ENCODE measurements at regions of chr15 and their contacts with region 1.

Region 1: DNA sequence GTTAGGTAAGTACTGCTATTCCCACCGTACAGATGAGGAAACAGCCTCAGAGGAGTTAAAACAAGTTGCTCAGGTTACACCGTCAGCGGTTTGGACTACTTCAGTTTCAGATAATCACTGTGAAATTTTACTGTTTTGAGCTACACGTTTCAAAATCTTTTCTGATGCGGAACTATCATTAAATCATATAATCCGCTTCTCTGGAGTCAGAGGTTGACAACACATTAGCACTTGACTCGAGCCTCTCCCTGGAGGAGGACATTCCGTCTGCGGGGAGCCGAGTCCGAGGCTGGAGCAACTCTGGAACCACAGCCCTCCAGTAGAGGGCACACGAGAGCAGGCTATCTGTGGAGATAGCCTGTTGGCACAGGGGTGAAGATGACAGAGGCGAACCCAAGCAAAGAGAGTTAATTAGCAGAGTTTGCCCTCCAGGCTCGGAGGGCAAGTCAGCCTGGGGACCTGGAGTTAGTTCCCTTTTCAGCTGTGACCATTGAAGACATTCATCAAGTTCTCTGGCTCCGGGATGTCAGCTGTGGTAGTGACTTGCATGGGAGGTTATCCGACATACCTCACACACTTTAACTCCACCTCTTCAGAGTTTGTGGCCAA is 131.2 kb downstream of the IGF1R start:
- DNase-seq: peak; percentile 53 to 65 (median 58)
- H3K4me3 ChIP-seq: no peak overlapping the region
- H3K4me3 Mint-ChIP-seq: peak overlapping the region in 6 of 8 donors; percentile 2 to 73 (median 42)
- H3K27ac ChIP-seq: no peak overlapping the region
- H3K27ac Mint-ChIP-seq: peak overlapping the region in 4 of 7 donors; percentile 15 to 88 (median 38)
- H3K4me1 ChIP-seq: peaks cover 14% of the 10 kb centered on the region
- H3K4me1 Mint-ChIP-seq: peaks cover 11 to 25% (median 18%) of the 10 kb centered on the region in 4 donors
- H3K27me3 ChIP-seq: no peaks in the 10 kb centered on the region
- H3K27me3 Mint-ChIP-seq: peaks cover 3 to 4% of the 10 kb centered on the region in 2 donors

Region 2: DNA sequence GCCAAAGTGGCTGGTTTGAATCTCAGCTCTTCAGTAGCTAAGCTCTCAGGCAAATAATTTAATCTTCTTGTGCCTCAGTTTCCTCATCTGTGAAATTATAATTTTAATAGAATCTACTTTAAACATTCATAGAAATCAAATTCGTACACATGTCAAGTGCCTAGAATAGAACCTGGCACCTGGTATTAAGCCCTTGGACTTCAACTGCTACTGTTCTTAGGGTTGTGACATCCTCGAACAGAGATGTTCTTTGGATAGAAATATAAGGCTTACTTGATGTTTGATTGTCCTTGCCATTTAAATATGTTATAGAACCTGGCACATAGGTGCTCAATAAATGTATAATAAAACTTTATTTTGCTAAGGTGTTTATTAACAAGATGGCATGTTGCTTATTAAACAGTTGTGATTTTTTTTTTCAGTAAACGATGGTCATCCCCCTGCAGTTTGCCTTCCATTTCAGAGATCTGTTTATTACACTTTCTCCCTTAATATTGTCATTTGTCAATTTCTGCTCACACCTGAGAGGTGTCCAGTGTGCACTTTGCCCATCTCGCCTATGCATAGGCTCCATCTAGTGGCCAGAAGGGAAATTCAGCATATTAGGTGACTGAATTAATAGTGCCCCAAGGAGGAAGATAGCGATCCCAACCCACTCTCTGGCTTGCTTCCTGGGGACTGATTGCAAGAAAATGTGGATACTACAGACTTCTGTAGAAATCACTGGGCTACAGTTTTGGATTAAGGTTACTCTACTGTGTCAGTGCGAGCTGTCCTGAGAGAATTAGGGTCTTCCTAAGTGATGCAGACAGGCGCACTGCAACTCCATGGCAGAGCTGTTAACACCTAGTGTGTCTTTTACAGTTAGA is 120.5 kb before region 1 on chr15:
- CTCF ChIA-PET with region 1: interaction called, 3 read pairs
- POLR2A ChIA-PET with region 1: no interaction called
- intact Hi-C with region 1: loop called (anchors 5 kb)
- DNase-seq: peak in 4 of 5 donors; percentile 27 to 40 (median 35)
- H3K4me3 ChIP-seq: no peak overlapping the region
- H3K4me3 Mint-ChIP-seq: no peak overlapping the region
- H3K27ac ChIP-seq: no peak overlapping the region
- H3K27ac Mint-ChIP-seq: no peak overlapping the region
- H3K4me1 ChIP-seq: peaks cover 3% of the 10 kb centered on the region
- H3K4me1 Mint-ChIP-seq: peaks cover 0 to 18% (median 10%) of the 10 kb centered on the region in 4 donors
- H3K27me3 ChIP-seq: no peaks in the 10 kb centered on the region
- H3K27me3 Mint-ChIP-seq: peaks cover 15 to 16% of the 10 kb centered on the region in 2 donors

Region 3: DNA sequence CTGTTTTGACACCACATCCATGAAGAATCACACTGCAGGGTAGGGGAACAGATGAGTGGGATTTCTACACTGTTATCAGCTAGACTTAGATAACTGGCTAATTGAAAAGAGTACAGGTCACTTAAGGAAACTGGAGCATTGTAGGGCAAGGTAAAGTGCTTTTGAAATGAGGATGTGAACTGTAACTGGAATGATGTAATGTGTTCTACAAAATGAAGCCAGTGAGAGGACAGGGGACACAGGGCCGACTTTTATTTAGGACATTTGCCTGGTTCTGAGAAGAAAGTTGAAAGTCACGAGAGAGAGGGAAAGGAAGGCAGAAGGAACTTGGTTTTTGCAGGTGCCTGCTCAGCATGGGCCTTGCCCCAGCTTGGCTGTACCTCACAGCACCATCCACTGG is 80.8 kb before region 1 on chr15:
- CTCF ChIA-PET with region 1: no interaction called
- POLR2A ChIA-PET with region 1: no interaction called
- intact Hi-C with region 1: no loop called
- DNase-seq: no peak
- H3K4me3 ChIP-seq: no peak overlapping the region
- H3K4me3 Mint-ChIP-seq: peak overlapping the region in 1 of 8 donors; percentile 21
- H3K27ac ChIP-seq: no peak overlapping the region
- H3K27ac Mint-ChIP-seq: peak overlapping the region in 1 of 7 donors; percentile 4
- H3K4me1 ChIP-seq: peaks cover 4% of the 10 kb centered on the region
- H3K4me1 Mint-ChIP-seq: peaks cover 14 to 56% (median 41%) of the 10 kb centered on the region in 4 donors
- H3K27me3 ChIP-seq: no peaks in the 10 kb centered on the region
- H3K27me3 Mint-ChIP-seq: peaks cover 4 to 6% of the 10 kb centered on the region in 2 donors

Region 4: DNA sequence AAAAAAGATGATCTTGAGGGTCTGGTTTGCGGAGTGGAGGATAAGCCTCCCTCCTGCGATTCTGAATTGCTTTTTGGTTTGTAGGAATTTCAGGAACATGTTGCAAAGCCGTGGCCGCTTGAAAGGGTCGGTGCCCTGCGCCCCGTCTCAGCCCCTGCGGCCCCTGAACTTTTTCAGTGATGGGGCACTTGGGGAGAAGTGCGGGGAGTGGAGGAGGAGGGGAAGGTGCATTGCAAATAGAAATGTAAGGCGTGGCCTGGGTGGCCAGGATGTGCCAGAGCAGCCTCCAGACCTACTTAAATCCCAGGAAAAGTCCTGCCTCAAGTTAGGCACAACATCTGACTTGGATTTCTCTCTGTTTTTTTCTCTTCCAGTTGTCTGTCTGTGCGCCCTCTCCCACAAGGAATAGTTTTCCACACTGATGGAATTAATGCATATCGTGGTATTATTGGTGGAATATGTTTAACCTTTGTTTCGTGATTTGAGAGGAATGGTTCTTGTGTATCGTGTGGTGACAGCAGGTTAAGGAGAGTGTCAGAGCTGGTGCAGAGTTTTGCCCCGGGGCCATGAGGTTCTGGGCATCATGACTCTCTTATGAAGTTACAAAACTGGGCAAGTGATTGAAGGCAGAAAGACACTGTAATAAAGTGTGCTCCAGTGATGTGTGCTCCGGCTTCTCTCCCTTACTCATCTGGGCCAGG is 74.2 kb after region 1 on chr15:
- CTCF ChIA-PET with region 1: interaction called, 11 read pairs
- POLR2A ChIA-PET with region 1: interaction called, 3 read pairs
- intact Hi-C with region 1: no loop called
- DNase-seq: no peak
- H3K4me3 ChIP-seq: peak overlapping the region in 1 of 2 donors; percentile 75
- H3K4me3 Mint-ChIP-seq: peak overlapping the region; percentile 11 to 99 (median 94)
- H3K27ac ChIP-seq: no peak overlapping the region
- H3K27ac Mint-ChIP-seq: peak overlapping the region; percentile 11 to 98 (median 95)
- H3K4me1 ChIP-seq: peaks cover 30% of the 10 kb centered on the region
- H3K4me1 Mint-ChIP-seq: peaks cover 24 to 53% (median 39%) of the 10 kb centered on the region in 4 donors
- H3K27me3 ChIP-seq: no peaks in the 10 kb centered on the region
- H3K27me3 Mint-ChIP-seq: no peaks in the 10 kb centered on the region

Region 5: DNA sequence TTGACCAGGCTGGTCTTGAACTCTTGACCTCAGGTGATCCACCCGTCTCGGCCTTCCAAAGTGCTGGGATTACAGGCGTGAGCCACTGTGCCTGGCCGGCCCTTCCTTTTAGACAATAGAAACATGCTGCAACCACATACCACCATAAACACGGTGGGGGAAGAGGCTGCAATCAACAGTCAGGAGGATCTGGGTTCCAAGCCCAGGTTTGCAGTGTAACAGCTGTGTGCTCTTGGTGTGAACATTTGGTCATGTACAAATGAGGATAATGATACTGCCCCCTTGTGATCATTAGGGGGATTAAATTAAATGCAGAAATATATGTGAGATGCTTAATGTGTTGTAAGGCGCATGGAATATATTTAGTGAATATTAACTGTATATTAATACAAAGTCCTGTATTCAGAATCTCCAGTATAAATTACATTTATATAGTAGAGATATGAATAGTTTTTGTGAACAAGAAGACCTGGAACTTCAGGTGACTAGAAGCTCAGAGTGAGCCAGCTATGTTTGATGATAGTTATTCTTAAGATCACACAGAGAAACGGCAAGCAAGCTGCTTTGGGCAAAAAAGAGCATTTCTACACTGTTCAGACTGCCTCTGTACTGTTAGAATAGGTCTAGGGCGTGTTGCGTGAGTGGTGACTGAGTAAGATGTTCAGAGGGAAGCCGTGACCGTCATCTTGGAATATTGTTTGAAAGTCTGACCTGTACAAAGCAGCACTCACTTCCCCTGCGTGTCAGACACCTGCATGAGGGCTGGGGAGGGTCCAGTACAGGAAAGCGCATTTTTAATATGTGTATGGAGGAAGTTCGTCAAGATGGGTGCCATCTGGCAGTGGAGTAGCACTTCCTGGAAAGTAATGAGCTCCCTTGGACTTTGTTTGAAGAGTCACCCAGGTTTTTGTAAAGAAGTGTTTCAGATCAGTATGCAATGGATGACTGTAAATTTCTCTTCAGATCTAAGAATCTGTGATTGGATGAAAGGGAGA is 102.3 kb after region 1 on chr15:
- CTCF ChIA-PET with region 1: interaction called, 137 read pairs
- POLR2A ChIA-PET with region 1: no interaction called
- intact Hi-C with region 1: loop called (anchors 1 kb)
- DNase-seq: peak in 4 of 5 donors; percentile 33 to 43 (median 36)
- H3K4me3 ChIP-seq: no peak overlapping the region
- H3K4me3 Mint-ChIP-seq: no peak overlapping the region
- H3K27ac ChIP-seq: no peak overlapping the region
- H3K27ac Mint-ChIP-seq: peak overlapping the region in 3 of 7 donors; percentile 5 to 55 (median 47)
- H3K4me1 ChIP-seq: no peaks in the 10 kb centered on the region
- H3K4me1 Mint-ChIP-seq: peaks cover 0 to 4% (median 1%) of the 10 kb centered on the region in 4 donors
- H3K27me3 ChIP-seq: no peaks in the 10 kb centered on the region
- H3K27me3 Mint-ChIP-seq: peaks cover 0 to 6% of the 10 kb centered on the region in 2 donors

Region 6: DNA sequence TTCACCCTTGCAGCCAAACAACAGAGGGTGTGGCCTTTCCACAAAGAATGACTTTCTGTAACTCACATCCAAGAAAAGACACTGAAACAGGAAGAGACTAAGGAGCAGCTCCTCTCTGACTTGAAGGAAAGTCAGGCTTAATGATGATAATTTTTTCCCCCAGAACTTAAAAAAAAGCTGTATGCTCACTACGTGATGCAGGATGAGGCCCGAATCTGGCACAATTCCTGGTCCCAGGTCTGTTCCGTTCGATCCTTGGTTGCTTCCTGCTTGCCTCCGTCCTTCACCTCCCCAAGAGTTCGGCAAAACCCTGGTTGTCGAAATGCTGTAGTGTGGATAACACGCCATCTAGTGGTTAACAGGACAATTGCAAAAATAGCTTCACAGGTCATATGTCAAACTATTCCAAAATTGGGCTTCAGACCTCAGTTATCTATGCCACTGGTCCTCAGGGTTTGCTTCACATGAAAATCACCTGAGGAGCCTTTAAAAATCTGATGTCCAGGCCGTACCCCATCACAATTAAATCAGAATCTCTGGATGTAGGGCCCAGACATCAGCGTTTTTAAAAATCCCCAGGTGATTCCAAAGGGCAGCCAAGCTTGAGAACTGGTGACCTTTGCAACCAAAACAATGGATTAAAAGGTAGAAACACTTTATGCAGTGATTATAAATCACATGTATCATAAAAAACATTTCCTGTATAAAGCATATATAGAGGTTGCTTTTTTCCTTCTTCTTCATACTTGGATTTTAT is 297.2 kb after region 1 on chr15:
- CTCF ChIA-PET with region 1: interaction called, 5 read pairs
- POLR2A ChIA-PET with region 1: no interaction called
- intact Hi-C with region 1: loop called (anchors 1 kb)
- DNase-seq: peak in 4 of 5 donors; percentile 48 to 60 (median 54)
- H3K4me3 ChIP-seq: peak overlapping the region; percentile 6 to 32
- H3K4me3 Mint-ChIP-seq: peak overlapping the region; percentile 82 to 95 (median 86)
- H3K27ac ChIP-seq: no peak overlapping the region
- H3K27ac Mint-ChIP-seq: peak overlapping the region in 1 of 7 donors; percentile 89
- H3K4me1 ChIP-seq: peaks cover 6% of the 10 kb centered on the region
- H3K4me1 Mint-ChIP-seq: peaks cover 4 to 6% (median 4%) of the 10 kb centered on the region in 4 donors
- H3K27me3 ChIP-seq: no peaks in the 10 kb centered on the region
- H3K27me3 Mint-ChIP-seq: peaks cover 7 to 10% of the 10 kb centered on the region in 2 donors

Measured in CD4-positive, alpha-beta memory T cell (primary cell).